A673 (cell line): ENCODE measurements at regions of chr6 and their contacts with region 1.

Region 1: GRCh38 chr6:161549977-161550655 is 276.3 kb upstream of the AGPAT4 start:
- DNase-seq: peak; percentile 7
- H3K4me3 ChIP-seq: no peak overlapping the region
- H3K27ac ChIP-seq: no peak overlapping the region
- H3K4me1 ChIP-seq: peaks cover 12% of the 10 kb centered on the region
- H3K27me3 ChIP-seq: peaks cover 38% of the 10 kb centered on the region
- CTCF ChIP-seq: no peak

Region 2: DNA sequence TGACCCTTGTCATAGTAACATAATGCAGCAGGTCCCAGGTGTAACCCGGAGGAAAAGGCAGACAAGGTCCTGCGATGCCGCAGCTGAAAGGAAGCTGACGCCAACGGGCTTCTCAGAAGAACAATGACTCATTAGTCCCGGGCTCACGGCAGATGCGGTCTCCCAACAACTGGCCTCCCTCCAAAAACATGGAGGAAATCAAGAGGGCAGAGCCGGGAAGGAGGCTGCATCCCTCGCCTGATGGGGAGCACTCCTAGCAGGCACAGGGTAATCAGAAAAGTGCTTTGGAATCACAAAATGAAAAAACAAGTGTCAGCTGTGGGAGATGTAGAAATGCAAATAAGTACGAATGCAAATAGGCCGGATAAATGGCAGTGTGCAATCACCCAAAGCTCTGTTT is 111.0 kb before region 1 on chr6:
- CTCF ChIA-PET with region 1: interaction called, 10 read pairs
- POLR2A ChIA-PET with region 1: no interaction called
- intact Hi-C with region 1: no loop called
- DNase-seq: peak; percentile 48
- H3K4me3 ChIP-seq: peak overlapping the region; percentile 23
- H3K27ac ChIP-seq: no peak overlapping the region
- H3K4me1 ChIP-seq: no peaks in the 10 kb centered on the region
- H3K27me3 ChIP-seq: no peaks in the 10 kb centered on the region
- CTCF ChIP-seq: no peak

Region 3: DNA sequence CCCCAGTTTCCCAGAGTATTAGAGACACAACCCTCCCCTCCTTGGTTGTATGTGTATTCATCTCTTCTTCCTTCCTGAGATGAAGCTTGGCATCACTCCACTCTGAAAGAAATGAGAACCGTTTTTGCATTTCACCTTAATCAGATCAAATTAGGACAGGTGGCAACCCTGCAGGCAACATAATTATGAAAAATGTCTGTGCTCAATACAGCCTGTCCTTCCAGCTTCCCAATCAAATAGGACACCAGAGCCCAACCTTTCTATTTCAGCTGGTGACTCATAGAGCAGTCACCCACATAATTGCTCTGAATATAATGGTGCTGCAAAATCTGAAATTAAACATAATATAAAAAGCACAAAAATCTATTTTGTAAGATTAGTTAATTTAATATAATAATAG is 33.9 kb after region 1 on chr6:
- CTCF ChIA-PET with region 1: no interaction called
- POLR2A ChIA-PET with region 1: no interaction called
- intact Hi-C with region 1: no loop called
- DNase-seq: no peak
- H3K4me3 ChIP-seq: no peak overlapping the region
- H3K27ac ChIP-seq: no peak overlapping the region
- H3K4me1 ChIP-seq: no peaks in the 10 kb centered on the region
- H3K27me3 ChIP-seq: no peaks in the 10 kb centered on the region
- CTCF ChIP-seq: no peak

Region 4: DNA sequence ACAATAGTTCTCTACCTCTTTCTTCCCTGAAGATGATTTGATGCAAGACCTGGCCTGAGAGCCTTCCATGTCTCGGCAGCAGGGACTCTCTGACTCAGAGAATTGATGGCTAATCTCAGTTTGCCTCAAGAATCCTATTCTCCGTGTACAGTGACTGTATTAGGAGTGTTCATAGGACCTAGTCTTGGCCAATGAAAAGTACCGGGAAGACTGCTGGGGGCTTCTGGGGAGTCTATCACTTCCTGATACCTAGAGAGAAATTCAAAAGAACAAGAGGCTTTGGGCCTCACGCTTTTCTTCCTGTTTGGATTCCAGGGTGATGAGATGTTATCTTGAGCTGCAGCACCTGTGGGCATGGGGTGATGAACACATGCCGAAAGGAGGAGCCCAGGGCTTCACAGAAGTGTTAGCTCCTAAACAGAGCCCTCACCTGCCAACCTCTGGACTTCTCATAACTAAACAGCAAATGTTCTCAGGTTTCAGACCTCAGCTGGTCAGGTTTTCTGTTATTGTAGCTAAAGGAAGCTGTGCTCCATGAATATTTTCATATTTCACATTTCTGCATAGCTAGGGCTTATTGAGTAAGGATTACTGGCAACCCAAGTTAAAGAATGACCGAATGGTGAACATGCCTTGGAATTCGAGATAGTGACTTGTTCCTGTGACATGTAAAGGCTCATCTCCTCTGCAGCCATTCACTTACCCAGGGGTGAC is 46.8 kb after region 1 on chr6:
- CTCF ChIA-PET with region 1: no interaction called
- POLR2A ChIA-PET with region 1: no interaction called
- intact Hi-C with region 1: no loop called
- DNase-seq: no peak
- H3K4me3 ChIP-seq: no peak overlapping the region
- H3K27ac ChIP-seq: no peak overlapping the region
- H3K4me1 ChIP-seq: no peaks in the 10 kb centered on the region
- H3K27me3 ChIP-seq: no peaks in the 10 kb centered on the region
- CTCF ChIP-seq: no peak